Pancreas (tissue), 10 donors: ENCODE measurements at regions of chr9 and their contacts with region 1.

Region 1: GRCh38 chr9:137034863-137035761 is 3.2 kb upstream of the FUT7 start:
- DNase-seq: peak; percentile 73 to 95 (median 88)
- ATAC-seq: peak; percentile 82 to 91 (median 90)
- H3K4me3 ChIP-seq: no peak overlapping the region
- H3K27ac ChIP-seq: no peak overlapping the region
- H3K4me1 ChIP-seq: no peaks in the 10 kb centered on the region
- H3K27me3 ChIP-seq: no peaks in the 10 kb centered on the region
- CTCF ChIP-seq: peak; percentile 80 to 88 (median 83)

Region 2: GRCh38 chr9:136769710-136770191 is 265.4 kb before region 1 on chr9:
- intact Hi-C with region 1: loop called in 1 of 3 experiments (anchors 5 kb)
- DNase-seq: peak in 2 of 6 donors; percentile 51 to 80
- ATAC-seq: peak in 3 of 4 donors; percentile 72 to 92 (median 91)
- H3K4me3 ChIP-seq: no peak overlapping the region
- H3K27ac ChIP-seq: no peak overlapping the region
- H3K4me1 ChIP-seq: no peaks in the 10 kb centered on the region
- H3K27me3 ChIP-seq: no peaks in the 10 kb centered on the region
- CTCF ChIP-seq: peak; percentile 17 to 37 (median 28)

Region 3: DNA sequence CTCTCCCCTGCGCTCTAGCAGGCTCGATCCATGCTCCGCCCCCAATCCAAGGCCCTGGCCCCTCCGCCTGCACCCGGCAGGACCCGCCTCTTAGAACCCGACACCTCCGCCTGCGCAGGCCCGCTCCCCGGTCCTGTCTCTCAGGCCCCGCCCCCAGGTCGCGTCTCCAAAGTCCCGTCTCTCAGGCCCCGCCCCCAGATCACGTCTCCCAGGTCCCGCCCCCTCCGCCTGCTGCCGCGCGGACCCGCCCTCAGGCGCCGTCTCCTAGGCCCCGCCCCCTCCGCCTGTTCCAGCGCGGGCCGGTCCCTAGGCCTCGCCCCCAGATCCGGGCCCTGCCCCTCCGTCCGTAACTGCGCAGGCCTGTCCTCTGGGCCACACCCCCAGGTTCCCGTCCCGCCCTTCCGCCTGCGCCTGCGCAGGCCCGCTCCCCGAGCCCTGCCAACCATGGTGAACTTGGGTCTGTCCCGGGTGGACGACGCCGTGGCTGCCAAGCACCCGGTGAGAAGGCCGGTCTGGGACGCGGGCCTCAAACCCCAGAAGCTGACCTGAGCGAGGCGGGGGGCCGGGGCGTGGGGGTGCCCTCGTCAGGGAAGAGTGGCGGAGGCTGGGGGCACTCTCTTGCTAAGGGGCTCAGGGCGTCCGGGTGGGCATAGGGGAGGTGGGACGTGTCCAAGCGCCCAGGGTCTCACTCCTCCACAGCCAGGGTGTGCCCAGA is 244.0 kb before region 1 on chr9 and contains the start of gene TMEM141:
- intact Hi-C with region 1: loop called in 2 of 3 experiments (anchors 5 kb)
- DNase-seq: peak; percentile 99 to 100 (median 100)
- ATAC-seq: peak; percentile 86 to 93 (median 88)
- H3K4me3 ChIP-seq: peak within 1 kb of the TSS; percentile 22 to 69 (median 52)
- H3K27ac ChIP-seq: peak within 1 kb of the TSS; percentile 90 to 96 (median 94)
- H3K4me1 ChIP-seq: peaks cover 25 to 41% (median 26%) of the 10 kb centered on the region in 3 donors
- H3K27me3 ChIP-seq: no peaks in the 10 kb centered on the region
- CTCF ChIP-seq: no peak
- total RNA-seq, gene TMEM141: 29.2 to 53.1 (median 34.2) TPM

Region 4: GRCh38 chr9:136944519-136945279 is 90.4 kb before region 1 on chr9 and contains the starts of genes C8G and FBXW5:
- intact Hi-C with region 1: loop called in 1 of 3 experiments (anchors 5 kb)
- DNase-seq: peak; percentile 92 to 99 (median 97)
- ATAC-seq: peak; percentile 87 to 88 (median 87)
- H3K4me3 ChIP-seq: peak within 1 kb of the TSS; percentile 85 to 92 (median 88)
- H3K27ac ChIP-seq: peak within 1 kb of the TSS; percentile 35 to 75 (median 69)
- H3K4me1 ChIP-seq: peaks cover 0 to 10% (median 0%) of the 10 kb centered on the region in 3 donors
- H3K27me3 ChIP-seq: no peaks in the 10 kb centered on the region
- CTCF ChIP-seq: peak; percentile 98 to 100 (median 99)
- total RNA-seq, gene C8G: 0.24 to 1.2 (median 0.43) TPM in 5 of 6 donors, not detected in the other
- total RNA-seq, gene FBXW5: 56.2 to 80.2 (median 60.4) TPM

Region 5: GRCh38 chr9:136965771-136966484 is 69.2 kb before region 1 on chr9:
- intact Hi-C with region 1: no loop called
- DNase-seq: no peak
- ATAC-seq: peak in 3 of 4 donors; percentile 14 to 50 (median 16)
- H3K4me3 ChIP-seq: no peak overlapping the region
- H3K27ac ChIP-seq: no peak overlapping the region
- H3K4me1 ChIP-seq: peaks cover 0 to 5% (median 4%) of the 10 kb centered on the region in 3 donors
- H3K27me3 ChIP-seq: no peaks in the 10 kb centered on the region
- CTCF ChIP-seq: no peak